CD4-positive, alpha-beta T cell (primary cell): ENCODE measurements at regions of chr1 and their contacts with region 1.

Region 1: DNA sequence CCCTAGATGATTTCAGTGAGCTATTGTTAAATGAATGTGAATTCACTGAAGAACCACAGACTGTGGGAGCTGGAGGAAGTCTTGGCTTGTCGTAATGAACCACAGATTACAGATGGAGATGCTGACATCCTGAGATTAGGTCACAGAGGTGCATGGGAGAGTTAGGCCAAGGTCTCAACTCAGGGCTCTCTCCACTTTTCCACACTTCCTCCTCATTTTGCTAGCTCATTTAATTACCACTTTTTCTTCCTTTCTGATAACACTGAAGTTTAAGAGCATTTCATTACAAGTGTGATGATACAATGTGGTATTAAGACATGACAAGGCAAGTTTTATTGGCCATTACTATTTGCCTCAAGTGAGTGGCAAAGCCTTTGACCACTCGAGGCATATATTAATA is 30.8 kb downstream of the ST6GALNAC3 start:
- DNase-seq: no peak
- ATAC-seq: no peak
- H3K4me3 ChIP-seq: no peak overlapping the region
- H3K4me3 Mint-ChIP-seq: no peak overlapping the region
- H3K27ac ChIP-seq: no peak overlapping the region
- H3K27ac Mint-ChIP-seq: no peak overlapping the region
- H3K4me1 ChIP-seq: no peaks in the 10 kb centered on the region
- H3K4me1 Mint-ChIP-seq: no peaks in the 10 kb centered on the region
- H3K27me3 ChIP-seq: peaks cover 0 to 4% of the 10 kb centered on the region in 2 experiments
- H3K27me3 Mint-ChIP-seq: peaks cover 10% of the 10 kb centered on the region
- CTCF ChIP-seq: no peak

Region 2: GRCh38 chr1:75991497-75992114 is 113.8 kb before region 1 on chr1:
- CTCF ChIA-PET with region 1: no interaction called
- POLR2A ChIA-PET with region 1: no interaction called
- intact Hi-C with region 1: loop called in 1 of 2 experiments (anchors 5 kb)
- DNase-seq: peak; percentile 45 to 84 (median 64)
- ATAC-seq: peak; percentile 56
- H3K4me3 ChIP-seq: no peak overlapping the region
- H3K4me3 Mint-ChIP-seq: no peak overlapping the region
- H3K27ac ChIP-seq: no peak overlapping the region
- H3K27ac Mint-ChIP-seq: no peak overlapping the region
- H3K4me1 ChIP-seq: no peaks in the 10 kb centered on the region
- H3K4me1 Mint-ChIP-seq: no peaks in the 10 kb centered on the region
- H3K27me3 ChIP-seq: peaks cover 0 to 3% of the 10 kb centered on the region in 2 experiments
- H3K27me3 Mint-ChIP-seq: no peaks in the 10 kb centered on the region
- CTCF ChIP-seq: peak; percentile 83

Region 3: GRCh38 chr1:76006234-76006633 is 99.1 kb before region 1 on chr1:
- CTCF ChIA-PET with region 1: no interaction called
- POLR2A ChIA-PET with region 1: no interaction called
- intact Hi-C with region 1: no loop called
- DNase-seq: no peak
- ATAC-seq: no peak
- H3K4me3 ChIP-seq: no peak overlapping the region
- H3K4me3 Mint-ChIP-seq: no peak overlapping the region
- H3K27ac ChIP-seq: no peak overlapping the region
- H3K27ac Mint-ChIP-seq: no peak overlapping the region
- H3K4me1 ChIP-seq: no peaks in the 10 kb centered on the region
- H3K4me1 Mint-ChIP-seq: no peaks in the 10 kb centered on the region
- H3K27me3 ChIP-seq: no peaks in the 10 kb centered on the region
- H3K27me3 Mint-ChIP-seq: no peaks in the 10 kb centered on the region
- CTCF ChIP-seq: no peak

Region 4: GRCh38 chr1:76048219-76048618 is 57.2 kb before region 1 on chr1:
- CTCF ChIA-PET with region 1: no interaction called
- POLR2A ChIA-PET with region 1: no interaction called
- intact Hi-C with region 1: loop called in 1 of 2 experiments (anchors 5 kb)
- DNase-seq: no peak
- ATAC-seq: no peak
- H3K4me3 ChIP-seq: no peak overlapping the region
- H3K4me3 Mint-ChIP-seq: no peak overlapping the region
- H3K27ac ChIP-seq: no peak overlapping the region
- H3K27ac Mint-ChIP-seq: no peak overlapping the region
- H3K4me1 ChIP-seq: no peaks in the 10 kb centered on the region
- H3K4me1 Mint-ChIP-seq: no peaks in the 10 kb centered on the region
- H3K27me3 ChIP-seq: no peaks in the 10 kb centered on the region
- H3K27me3 Mint-ChIP-seq: peaks cover 20% of the 10 kb centered on the region
- CTCF ChIP-seq: no peak